Caco-2 (cell line): ENCODE measurements at regions of chr9 and their contacts with region 1.

Region 1: GRCh38 chr9:99819856-99820684 is 1.6 kb upstream of the NR4A3 start:
- DNase-seq: peak; percentile 92 to 94
- H3K4me3 ChIP-seq: peak overlapping the region; percentile 95
- H3K4me3 Mint-ChIP-seq: peak overlapping the region; percentile 72
- H3K27ac Mint-ChIP-seq: peak overlapping the region; percentile 71
- H3K4me1 ChIP-seq: peaks cover 4% of the 10 kb centered on the region
- H3K4me1 Mint-ChIP-seq: peaks cover 7% of the 10 kb centered on the region
- H3K27me3 ChIP-seq: peaks cover 8% of the 10 kb centered on the region
- H3K27me3 Mint-ChIP-seq: peaks cover 3% of the 10 kb centered on the region
- CTCF ChIP-seq: no peak

Region 2: GRCh38 chr9:99221621-99222415 is 598.3 kb before region 1 on chr9 and contains the starts of genes ALG2 and SEC61B:
- CTCF ChIA-PET with region 1: no interaction called
- POLR2A ChIA-PET with region 1: no interaction called
- intact Hi-C with region 1: loop called (anchors 5 kb)
- DNase-seq: peak; percentile 94
- H3K4me3 ChIP-seq: peak within 1 kb of the TSS; percentile 72
- H3K4me3 Mint-ChIP-seq: peak within 1 kb of the TSS; percentile 100
- H3K27ac Mint-ChIP-seq: peak within 1 kb of the TSS; percentile 100
- H3K4me1 ChIP-seq: no peaks in the 10 kb centered on the region
- H3K4me1 Mint-ChIP-seq: peaks cover 21% of the 10 kb centered on the region
- H3K27me3 ChIP-seq: no peaks in the 10 kb centered on the region
- H3K27me3 Mint-ChIP-seq: no peaks in the 10 kb centered on the region
- CTCF ChIP-seq: no peak
- total RNA-seq, gene ALG2: 37.9 and 39.8 TPM in 2 replicates
- total RNA-seq, gene SEC61B: 167 and 170 TPM in 2 replicates

Region 3: DNA sequence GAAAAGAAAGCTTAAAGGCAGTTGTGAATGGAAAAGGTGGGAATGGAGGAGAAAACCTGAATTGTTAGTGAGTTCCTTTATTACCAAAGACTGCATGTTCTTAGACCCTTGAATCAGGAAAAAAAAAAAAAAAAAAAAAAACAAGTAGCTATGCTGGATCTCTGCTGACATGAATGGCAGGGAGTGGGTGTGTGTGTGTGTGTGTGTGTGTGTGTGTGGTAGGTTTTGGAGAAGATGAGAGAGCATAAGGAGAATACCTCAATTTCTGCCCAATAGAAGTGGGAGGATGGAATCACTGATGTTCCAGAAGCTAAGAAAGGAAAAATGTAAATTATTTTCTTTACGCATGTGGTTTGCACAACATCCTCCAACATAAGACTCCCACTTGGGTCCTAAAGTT is 23.8 kb before region 1 on chr9:
- CTCF ChIA-PET with region 1: no interaction called
- POLR2A ChIA-PET with region 1: no interaction called
- intact Hi-C with region 1: no loop called
- DNase-seq: no peak
- H3K4me3 ChIP-seq: no peak overlapping the region
- H3K4me3 Mint-ChIP-seq: no peak overlapping the region
- H3K27ac Mint-ChIP-seq: no peak overlapping the region
- H3K4me1 ChIP-seq: no peaks in the 10 kb centered on the region
- H3K4me1 Mint-ChIP-seq: no peaks in the 10 kb centered on the region
- H3K27me3 ChIP-seq: no peaks in the 10 kb centered on the region
- H3K27me3 Mint-ChIP-seq: no peaks in the 10 kb centered on the region
- CTCF ChIP-seq: no peak

Region 4: DNA sequence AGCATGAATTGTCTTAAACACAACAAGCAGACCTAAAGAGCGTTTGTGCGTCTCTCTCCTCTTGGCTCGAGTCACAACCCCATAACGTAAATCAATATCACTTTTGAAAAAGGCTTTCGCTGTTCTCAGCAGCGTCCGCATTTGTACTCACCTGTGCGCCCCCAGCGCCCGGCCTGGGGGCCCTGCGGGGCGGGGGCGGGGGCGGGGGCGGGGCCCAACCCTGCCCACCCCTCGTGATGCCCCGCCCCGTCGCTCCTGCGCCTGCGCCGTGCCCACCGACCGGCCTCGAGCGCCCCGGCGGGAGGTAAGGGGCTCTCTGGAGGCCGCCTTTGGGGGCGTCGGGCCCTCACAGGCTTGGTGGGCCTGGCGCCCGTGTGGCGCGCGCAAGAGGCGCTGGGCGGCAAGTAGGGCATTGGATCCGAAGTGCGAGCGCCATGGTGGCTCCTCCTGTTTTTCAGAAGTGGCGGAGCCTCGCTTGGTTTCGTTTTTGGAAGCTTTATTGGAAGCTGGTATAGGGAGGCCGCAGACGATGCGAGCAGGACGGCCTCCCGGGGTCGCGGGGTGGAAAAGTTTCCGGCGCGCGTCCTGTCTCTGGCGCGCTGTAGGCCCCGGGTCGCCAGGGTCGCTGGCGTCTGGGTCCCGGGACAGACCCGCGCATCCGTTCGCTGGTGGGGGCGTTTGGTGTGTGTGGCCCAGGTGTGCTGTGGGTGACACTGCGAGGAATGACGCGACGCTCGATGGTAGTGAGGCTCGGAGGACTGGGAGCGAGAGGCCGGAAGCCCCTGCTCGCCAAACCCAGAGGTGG is 86.5 kb after region 1 on chr9 and contains the start of gene STX17:
- CTCF ChIA-PET with region 1: interaction called, 6 read pairs
- POLR2A ChIA-PET with region 1: interaction called, 3 read pairs
- intact Hi-C with region 1: loop called (anchors 1 kb)
- DNase-seq: peak; percentile 80 to 88
- H3K4me3 ChIP-seq: peak within 1 kb of the TSS; percentile 89
- H3K4me3 Mint-ChIP-seq: peak within 1 kb of the TSS; percentile 76
- H3K27ac Mint-ChIP-seq: peak within 1 kb of the TSS; percentile 70
- H3K4me1 ChIP-seq: peaks cover 10% of the 10 kb centered on the region
- H3K4me1 Mint-ChIP-seq: peaks cover 18% of the 10 kb centered on the region
- H3K27me3 ChIP-seq: no peaks in the 10 kb centered on the region
- H3K27me3 Mint-ChIP-seq: peaks cover 2% of the 10 kb centered on the region
- CTCF ChIP-seq: no peak
- total RNA-seq, gene STX17: 40.2 and 41.1 TPM in 2 replicates

Region 5: DNA sequence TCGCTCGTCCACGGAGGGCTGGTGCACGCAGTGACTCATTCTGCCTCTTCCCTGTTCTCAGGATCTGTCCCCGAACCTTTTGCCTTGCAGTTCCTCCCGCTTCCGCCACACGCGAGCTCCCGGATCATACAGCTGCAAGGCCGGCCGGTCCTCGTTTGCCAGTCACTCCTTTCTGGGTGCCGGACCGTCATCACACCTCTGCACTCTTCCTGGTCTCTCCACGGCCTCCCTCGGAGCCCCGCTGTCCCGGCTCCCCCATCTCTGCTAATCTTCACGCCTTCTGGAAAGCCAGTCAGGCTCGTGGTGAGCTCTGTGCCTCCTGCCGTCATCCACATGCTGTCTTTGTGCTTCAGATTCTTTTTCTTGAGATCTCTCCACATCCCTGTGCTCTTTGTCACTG is 178.2 kb after region 1 on chr9:
- CTCF ChIA-PET with region 1: no interaction called
- POLR2A ChIA-PET with region 1: no interaction called
- intact Hi-C with region 1: loop called (anchors 5 kb)
- DNase-seq: no peak
- H3K4me3 ChIP-seq: no peak overlapping the region
- H3K4me3 Mint-ChIP-seq: no peak overlapping the region
- H3K27ac Mint-ChIP-seq: no peak overlapping the region
- H3K4me1 ChIP-seq: no peaks in the 10 kb centered on the region
- H3K4me1 Mint-ChIP-seq: no peaks in the 10 kb centered on the region
- H3K27me3 ChIP-seq: no peaks in the 10 kb centered on the region
- H3K27me3 Mint-ChIP-seq: no peaks in the 10 kb centered on the region
- CTCF ChIP-seq: no peak

Region 6: GRCh38 chr9:100216178-100216787 is 396.2 kb after region 1 on chr9:
- CTCF ChIA-PET with region 1: no interaction called
- POLR2A ChIA-PET with region 1: no interaction called
- intact Hi-C with region 1: loop called (anchors 10 kb)
- DNase-seq: peak; percentile 44 to 58
- H3K4me3 ChIP-seq: no peak overlapping the region
- H3K4me3 Mint-ChIP-seq: no peak overlapping the region
- H3K27ac Mint-ChIP-seq: no peak overlapping the region
- H3K4me1 ChIP-seq: no peaks in the 10 kb centered on the region
- H3K4me1 Mint-ChIP-seq: no peaks in the 10 kb centered on the region
- H3K27me3 ChIP-seq: no peaks in the 10 kb centered on the region
- H3K27me3 Mint-ChIP-seq: no peaks in the 10 kb centered on the region
- CTCF ChIP-seq: peak; percentile 50 to 65